Activated B cell treated with CpG ODN at 0.5 μM for 24 hours (primary cell): ENCODE measurements at regions of chr15 and their contacts with region 1.

Region 1: DNA sequence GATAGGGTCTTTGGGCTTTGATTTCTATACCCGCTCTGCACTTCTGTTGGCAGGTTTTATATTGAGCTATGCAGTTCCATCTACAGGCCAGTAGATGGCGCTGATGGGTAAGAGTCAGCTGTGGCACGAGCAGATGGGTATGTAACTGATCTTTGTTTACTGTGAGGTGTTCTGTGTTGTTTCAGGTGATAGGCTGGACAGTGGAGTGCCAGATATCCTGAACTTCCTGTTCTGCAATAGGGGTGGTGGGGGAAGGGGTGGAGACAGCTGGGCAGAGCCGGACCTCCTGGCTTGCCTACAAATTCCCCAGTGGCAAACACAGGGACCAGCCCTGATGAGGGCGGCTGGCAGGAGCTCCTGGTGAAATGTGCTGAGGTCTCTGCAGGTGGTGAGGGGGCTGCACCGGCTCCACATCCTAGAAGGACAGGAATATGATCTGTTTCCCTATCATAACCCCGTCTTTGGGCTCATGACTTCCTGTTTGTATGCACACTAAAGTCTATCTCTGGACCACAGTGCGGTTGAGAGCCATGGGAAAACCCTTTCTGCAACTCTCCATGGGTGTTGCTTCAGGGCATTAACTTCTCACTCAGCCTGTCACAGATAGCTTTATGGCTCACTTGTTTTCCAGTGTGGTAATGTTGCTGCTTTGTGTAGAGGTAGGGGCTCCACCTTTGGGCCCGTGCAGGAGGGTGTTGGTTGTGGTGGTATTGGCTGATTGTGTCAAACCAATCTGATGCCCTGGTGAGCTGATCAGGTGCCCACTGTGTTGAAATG is 13.4 kb upstream of the FAM98B start:
- DNase-seq: no peak
- ATAC-seq: peak; percentile 96
- H3K4me3 Mint-ChIP-seq: no peak overlapping the region
- H3K27ac Mint-ChIP-seq: no peak overlapping the region
- H3K4me1 Mint-ChIP-seq: peaks cover 5% of the 10 kb centered on the region
- H3K27me3 Mint-ChIP-seq: peaks cover 34% of the 10 kb centered on the region
- CTCF ChIP-seq: peak; percentile 64

Region 2: DNA sequence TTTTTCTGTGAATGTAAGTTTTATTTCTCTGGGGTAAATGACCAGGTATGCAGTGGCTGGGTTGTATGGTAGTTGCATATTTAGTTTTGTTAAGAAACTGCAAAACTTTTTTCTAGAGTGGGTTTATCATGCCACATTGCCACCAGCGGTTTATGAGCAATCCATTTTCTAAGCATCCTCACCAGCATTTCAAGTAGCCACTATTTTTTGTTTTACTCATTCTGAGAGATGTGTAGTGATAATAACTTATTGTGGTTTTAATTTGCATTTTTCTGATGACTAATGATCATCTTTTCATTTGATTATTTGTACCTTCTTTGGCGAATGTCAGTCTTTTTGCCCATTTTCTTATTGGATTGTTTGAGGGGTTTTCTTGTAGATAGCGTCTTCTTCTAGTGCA is 131.7 kb before region 1 on chr15:
- CTCF ChIA-PET with region 1: no interaction called
- POLR2A ChIA-PET with region 1: no interaction called
- intact Hi-C with region 1: loop called (anchors 5 kb)
- DNase-seq: no peak
- ATAC-seq: peak; percentile 21
- H3K4me3 Mint-ChIP-seq: no peak overlapping the region
- H3K27ac Mint-ChIP-seq: no peak overlapping the region
- H3K4me1 Mint-ChIP-seq: peaks cover 19% of the 10 kb centered on the region
- H3K27me3 Mint-ChIP-seq: no peaks in the 10 kb centered on the region
- CTCF ChIP-seq: no peak

Region 3: GRCh38 chr15:38461066-38461833 is 20.7 kb after region 1 on chr15:
- CTCF ChIA-PET with region 1: interaction called, 12 read pairs
- POLR2A ChIA-PET with region 1: no interaction called
- intact Hi-C with region 1: no loop called
- DNase-seq: no peak
- ATAC-seq: peak; percentile 85
- H3K4me3 Mint-ChIP-seq: no peak overlapping the region
- H3K27ac Mint-ChIP-seq: no peak overlapping the region
- H3K4me1 Mint-ChIP-seq: peaks cover 36% of the 10 kb centered on the region
- H3K27me3 Mint-ChIP-seq: no peaks in the 10 kb centered on the region
- CTCF ChIP-seq: no peak

Region 4: GRCh38 chr15:38660738-38661137 is 220.2 kb after region 1 on chr15:
- CTCF ChIA-PET with region 1: no interaction called
- POLR2A ChIA-PET with region 1: no interaction called
- intact Hi-C with region 1: no loop called
- DNase-seq: no peak
- ATAC-seq: no peak
- H3K4me3 Mint-ChIP-seq: no peak overlapping the region
- H3K27ac Mint-ChIP-seq: no peak overlapping the region
- H3K4me1 Mint-ChIP-seq: peaks cover 22% of the 10 kb centered on the region
- H3K27me3 Mint-ChIP-seq: no peaks in the 10 kb centered on the region
- CTCF ChIP-seq: no peak

Region 5: GRCh38 chr15:38690689-38691332 is 250.3 kb after region 1 on chr15:
- CTCF ChIA-PET with region 1: interaction called, 106 read pairs
- POLR2A ChIA-PET with region 1: no interaction called
- intact Hi-C with region 1: loop called (anchors 1 kb)
- DNase-seq: peak; percentile 38
- ATAC-seq: peak; percentile 89
- H3K4me3 Mint-ChIP-seq: no peak overlapping the region
- H3K27ac Mint-ChIP-seq: no peak overlapping the region
- H3K4me1 Mint-ChIP-seq: peaks cover 14% of the 10 kb centered on the region
- H3K27me3 Mint-ChIP-seq: no peaks in the 10 kb centered on the region
- CTCF ChIP-seq: no peak

Region 6: GRCh38 chr15:38707802-38708671 is 267.5 kb after region 1 on chr15:
- CTCF ChIA-PET with region 1: interaction called, 14 read pairs
- POLR2A ChIA-PET with region 1: no interaction called
- intact Hi-C with region 1: no loop called
- DNase-seq: no peak
- ATAC-seq: peak; percentile 65
- H3K4me3 Mint-ChIP-seq: no peak overlapping the region
- H3K27ac Mint-ChIP-seq: no peak overlapping the region
- H3K4me1 Mint-ChIP-seq: no peaks in the 10 kb centered on the region
- H3K27me3 Mint-ChIP-seq: peaks cover 14% of the 10 kb centered on the region
- CTCF ChIP-seq: no peak